ENCODE measurements at regions of chr1 and their contacts with region 1.

Region 1: DNA sequence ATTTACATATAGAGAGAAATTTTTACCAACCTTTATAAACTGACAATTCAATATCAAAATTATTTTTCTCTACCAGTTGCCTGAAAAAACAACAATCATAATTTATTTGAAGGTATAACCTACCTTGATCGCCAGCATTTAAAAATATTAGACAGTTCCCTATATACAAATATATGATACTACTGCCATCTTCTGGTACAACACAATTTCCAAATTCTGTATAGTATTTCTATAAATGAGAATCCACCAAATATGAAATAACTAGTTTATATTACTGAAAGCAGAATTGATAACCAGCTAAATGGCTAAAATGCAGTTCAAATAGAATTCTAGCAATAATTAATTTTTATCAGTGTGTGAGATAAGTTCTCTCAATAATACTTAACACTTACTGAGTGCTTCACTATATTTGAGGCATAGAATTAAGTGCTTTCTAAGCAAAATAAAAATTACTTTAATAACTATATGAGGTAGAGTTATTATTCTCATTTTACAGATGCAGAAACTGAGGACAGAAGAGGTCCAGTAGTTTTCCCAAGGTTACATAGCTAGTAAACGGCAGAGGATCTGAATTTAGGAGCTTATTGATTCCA is 75.6 kb downstream of the PIGK start:
- DNase-seq: no peak
- H3K4me3 ChIP-seq: no peak overlapping the region
- H3K27ac ChIP-seq: no peak overlapping the region
- H3K27me3 ChIP-seq: no peaks in the 10 kb centered on the region
- CTCF ChIP-seq: peak in 54 of 56 donors; percentile 3 to 72 (median 52)

Region 2: GRCh38 chr1:76713535-76713934 is 430.1 kb before region 1 on chr1:
- intact Hi-C with region 1: no loop called
- DNase-seq: no peak
- H3K4me3 ChIP-seq: no peak overlapping the region
- H3K27ac ChIP-seq: no peak overlapping the region
- H3K27me3 ChIP-seq: no peaks in the 10 kb centered on the region
- CTCF ChIP-seq: no peak

Region 3: DNA sequence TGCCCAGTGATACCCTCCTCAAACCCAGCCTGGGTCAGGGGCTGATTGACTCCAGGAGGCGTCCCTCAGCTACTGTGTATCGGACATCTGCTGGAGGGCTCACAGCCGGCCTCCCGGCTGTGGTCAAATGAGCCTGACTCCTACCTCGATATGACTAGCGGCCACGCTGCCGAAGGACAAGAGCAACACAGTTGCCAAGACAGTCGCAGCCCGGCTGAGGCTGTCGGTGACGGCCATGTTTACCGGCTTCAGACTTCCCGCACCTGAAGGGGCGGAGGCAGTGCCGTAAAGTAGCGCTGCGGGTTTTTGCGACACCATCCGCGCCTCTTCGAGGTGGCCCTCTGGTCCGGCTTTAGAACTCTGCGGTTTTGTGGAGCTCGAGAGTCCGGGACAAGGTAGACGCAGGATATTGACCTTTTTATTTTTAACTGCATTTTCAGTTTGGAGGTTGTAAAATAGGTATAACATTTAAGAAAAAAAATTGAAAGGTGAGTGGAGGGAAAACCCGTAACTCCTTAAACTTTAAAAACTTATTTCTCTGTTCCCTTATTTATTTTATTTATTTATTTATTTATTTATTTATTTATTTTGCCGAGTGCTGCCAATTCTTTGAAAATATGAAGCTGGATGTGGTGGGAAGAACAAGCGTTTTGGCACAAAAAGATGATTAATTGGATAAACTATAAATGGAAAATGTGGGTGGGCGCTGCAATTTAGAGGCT is 75.7 kb after region 1 on chr1 and contains the start of gene PIGK:
- intact Hi-C with region 1: loop called in 1 of 2 experiments (anchors 10 kb)
- DNase-seq: peak; percentile 75 to 90 (median 86)
- H3K4me3 ChIP-seq: peak within 1 kb of the TSS; percentile 54 to 97 (median 84)
- H3K27ac ChIP-seq: peak within 1 kb of the TSS; percentile 26 to 97 (median 89)
- H3K27me3 ChIP-seq: no peaks in the 10 kb centered on the region
- CTCF ChIP-seq: peak in 42 of 56 donors; percentile 3 to 54 (median 30)
- total RNA-seq, gene PIGK: 15.2 to 61.9 (median 34.6) TPM

Region 4: GRCh38 chr1:77473690-77474089 is 330.1 kb after region 1 on chr1:
- intact Hi-C with region 1: no loop called
- DNase-seq: no peak
- H3K4me3 ChIP-seq: no peak overlapping the region
- H3K27ac ChIP-seq: peak overlapping the region in 54 of 59 donors; percentile 0 to 96 (median 61)
- H3K27me3 ChIP-seq: no peaks in the 10 kb centered on the region
- CTCF ChIP-seq: no peak

Region 5: DNA sequence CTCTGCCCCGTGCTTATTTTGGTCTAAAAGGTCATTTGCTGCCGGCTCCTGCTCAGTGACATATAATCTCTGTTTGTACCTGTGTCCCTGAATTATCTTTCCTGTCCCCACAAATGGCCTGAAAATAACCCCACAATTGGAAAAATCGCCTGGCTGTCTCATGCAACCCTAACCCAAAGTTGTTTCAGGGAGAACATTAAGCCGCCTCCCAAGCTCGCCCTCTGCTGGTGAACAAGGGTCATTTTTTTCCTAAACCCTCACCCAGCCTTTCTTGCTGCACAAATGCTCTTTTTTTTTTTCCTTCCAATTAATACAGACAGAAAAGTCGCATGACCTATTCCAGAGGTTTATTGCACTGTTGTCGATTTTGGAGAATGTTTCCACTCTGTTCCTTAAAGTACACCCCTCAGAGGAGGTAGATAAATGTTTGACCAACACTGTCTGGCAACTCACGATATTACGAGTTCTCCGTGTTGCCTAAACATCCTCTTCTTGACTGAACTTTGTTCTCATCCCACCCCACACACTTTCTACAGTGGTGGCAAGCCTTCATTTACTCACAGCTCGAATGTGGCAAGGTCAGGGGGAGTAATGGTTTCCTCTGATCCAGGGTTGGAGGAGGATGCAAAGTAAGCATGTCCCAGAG is 390.2 kb after region 1 on chr1:
- intact Hi-C with region 1: loop called (anchors 5 kb)
- DNase-seq: peak in 7 of 10 donors; percentile 18 to 70 (median 63)
- H3K4me3 ChIP-seq: peak overlapping the region in 9 of 59 donors; percentile 0 to 30 (median 11)
- H3K27ac ChIP-seq: peak overlapping the region; percentile 1 to 94 (median 81)
- H3K27me3 ChIP-seq: no peaks in the 10 kb centered on the region
- CTCF ChIP-seq: peak; percentile 81 to 98 (median 90)

Region 6: GRCh38 chr1:77900687-77901293 is 757.2 kb after region 1 on chr1:
- intact Hi-C with region 1: loop called in 1 of 2 experiments (anchors 5 kb)
- DNase-seq: peak in 2 of 10 donors; percentile 38 to 53
- H3K4me3 ChIP-seq: peak overlapping the region in 1 of 59 donors; percentile 7
- H3K27ac ChIP-seq: no peak overlapping the region
- H3K27me3 ChIP-seq: no peaks in the 10 kb centered on the region
- CTCF ChIP-seq: peak; percentile 34 to 86 (median 68)

Region 7: DNA sequence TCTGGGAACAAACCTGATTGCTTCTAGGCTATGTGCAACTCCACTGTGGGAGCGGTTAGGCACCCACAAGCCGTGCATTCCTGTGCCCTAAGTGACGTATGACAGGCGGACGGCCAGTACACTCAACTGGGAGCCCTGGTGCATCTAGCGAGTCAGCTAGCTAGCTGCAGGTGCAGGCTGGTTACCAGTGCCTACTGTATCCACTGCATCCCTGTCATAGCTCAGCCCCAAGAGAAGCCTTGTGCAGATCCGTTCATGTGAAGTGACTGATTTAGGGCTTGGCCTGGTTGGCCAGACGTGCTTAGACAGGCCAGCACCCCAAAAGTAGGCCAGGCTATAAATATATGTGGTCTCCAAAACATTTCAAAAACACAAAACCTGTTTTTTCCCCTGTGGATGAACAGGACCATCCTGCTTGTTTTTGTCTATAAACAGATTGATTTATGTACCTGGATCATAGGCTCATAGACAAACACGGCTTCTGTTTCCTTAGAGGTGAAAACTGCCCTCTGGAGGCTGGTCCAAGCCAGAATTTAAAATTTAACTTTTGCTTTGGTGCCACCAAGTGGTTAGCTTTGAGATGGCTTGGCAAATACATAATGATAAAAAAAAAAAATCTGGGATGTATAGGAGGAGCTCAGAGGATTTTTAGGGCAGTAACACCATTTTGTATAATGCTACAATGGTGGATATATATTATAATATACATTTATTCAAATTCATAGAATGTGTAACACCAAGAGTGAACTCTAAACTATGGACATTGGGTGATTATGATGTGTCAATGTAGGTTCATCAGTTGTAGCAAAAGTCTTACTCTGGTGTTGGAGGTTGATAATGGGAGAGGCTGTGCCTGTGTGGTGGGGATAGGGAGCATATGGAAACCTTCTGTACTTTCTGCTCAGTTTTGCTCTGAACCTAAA is 970.7 kb after region 1 on chr1:
- intact Hi-C with region 1: loop called in 1 of 2 experiments (anchors 5 kb)
- DNase-seq: peak in 6 of 10 donors; percentile 15 to 57 (median 48)
- H3K4me3 ChIP-seq: peak overlapping the region in 3 of 59 donors; percentile 10 to 23 (median 10)
- H3K27ac ChIP-seq: peak overlapping the region in 12 of 59 donors; percentile 9 to 66 (median 35)
- H3K27me3 ChIP-seq: no peaks in the 10 kb centered on the region
- CTCF ChIP-seq: peak; percentile 77 to 99 (median 94)